WTC11 (cell line): ENCODE measurements at regions of chr15 and their contacts with region 1.

Region 1: GRCh38 chr15:52227456-52227855 is 36.3 kb upstream of the GNB5 start:
- DNase-seq: peak; percentile 76
- ATAC-seq: peak; percentile 95
- H3K4me3 Mint-ChIP-seq: no peak overlapping the region
- H3K27ac Mint-ChIP-seq: no peak overlapping the region
- H3K4me1 Mint-ChIP-seq: no peaks in the 10 kb centered on the region
- H3K27me3 Mint-ChIP-seq: no peaks in the 10 kb centered on the region
- CTCF ChIP-seq: peak; percentile 60

Region 2: GRCh38 chr15:52171386-52171785 is 56.1 kb before region 1 on chr15:
- CTCF ChIA-PET with region 1: interaction called, 10 read pairs
- POLR2A ChIA-PET with region 1: no interaction called
- DNase-seq: no peak
- ATAC-seq: peak; percentile 94
- H3K4me3 Mint-ChIP-seq: no peak overlapping the region
- H3K27ac Mint-ChIP-seq: no peak overlapping the region
- H3K4me1 Mint-ChIP-seq: peaks cover 9% of the 10 kb centered on the region
- H3K27me3 Mint-ChIP-seq: no peaks in the 10 kb centered on the region
- CTCF ChIP-seq: no peak

Region 3: GRCh38 chr15:52179278-52180195 is 47.9 kb before region 1 on chr15:
- CTCF ChIA-PET with region 1: interaction called, 15 read pairs
- POLR2A ChIA-PET with region 1: no interaction called
- DNase-seq: peak; percentile 89
- ATAC-seq: peak; percentile 87
- H3K4me3 Mint-ChIP-seq: peak overlapping the region; percentile 94
- H3K27ac Mint-ChIP-seq: peak overlapping the region; percentile 96
- H3K4me1 Mint-ChIP-seq: peaks cover 31% of the 10 kb centered on the region
- H3K27me3 Mint-ChIP-seq: peaks cover 22% of the 10 kb centered on the region
- CTCF ChIP-seq: no peak

Region 4: DNA sequence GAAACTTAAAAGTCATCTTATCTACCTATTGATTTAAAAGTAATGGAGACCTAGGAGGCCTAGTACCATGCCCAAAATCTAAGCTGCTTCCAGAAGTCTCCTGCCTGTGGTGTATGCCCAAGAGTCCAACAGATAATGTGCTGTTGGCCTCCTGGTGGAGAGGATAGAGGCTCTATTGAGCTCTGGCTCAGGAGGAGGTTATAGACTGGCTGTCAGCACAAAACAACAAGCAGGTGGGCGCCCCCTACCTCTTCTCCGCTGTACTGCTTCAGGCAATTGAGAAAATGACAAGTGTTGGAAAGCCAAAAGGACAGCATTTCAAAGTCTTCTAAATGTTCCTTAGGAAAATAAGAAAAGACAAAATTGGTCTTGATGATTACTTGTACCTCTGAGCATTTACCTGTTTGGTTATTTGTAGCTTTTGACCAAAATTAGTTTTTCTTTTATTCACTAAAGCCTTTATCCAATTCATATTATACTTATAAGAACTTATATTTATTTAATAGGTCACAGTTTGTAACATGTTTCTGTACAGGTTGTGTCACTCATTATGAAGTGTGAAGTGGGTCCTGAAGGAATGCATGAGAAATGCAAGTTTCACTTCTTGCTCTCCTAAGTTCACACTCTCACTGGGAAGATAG is 19.0 kb before region 1 on chr15:
- CTCF ChIA-PET with region 1: interaction called, 39 read pairs
- POLR2A ChIA-PET with region 1: no interaction called
- DNase-seq: peak; percentile 86
- ATAC-seq: peak; percentile 98
- H3K4me3 Mint-ChIP-seq: no peak overlapping the region
- H3K27ac Mint-ChIP-seq: no peak overlapping the region
- H3K4me1 Mint-ChIP-seq: peaks cover 7% of the 10 kb centered on the region
- H3K27me3 Mint-ChIP-seq: no peaks in the 10 kb centered on the region
- CTCF ChIP-seq: peak; percentile 90

Region 5: DNA sequence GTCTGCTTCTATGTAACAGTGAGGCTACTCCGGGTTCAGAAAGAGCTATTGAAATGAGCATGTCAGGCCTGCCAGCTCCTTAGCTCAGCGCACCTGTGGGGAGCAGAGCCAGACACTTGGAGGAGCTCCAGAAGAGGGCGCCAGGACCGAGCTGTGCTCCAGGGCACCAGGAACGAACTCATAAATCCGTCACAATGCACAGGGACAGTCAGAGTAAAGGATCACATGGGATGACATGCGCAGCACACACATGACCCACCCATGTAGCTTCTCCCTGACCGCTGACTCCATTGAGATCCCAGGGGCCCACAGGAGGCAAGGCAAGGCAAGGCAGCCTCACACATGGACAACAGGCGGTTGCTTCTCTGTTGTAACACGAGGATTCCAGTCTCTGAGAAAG is 10.3 kb before region 1 on chr15:
- CTCF ChIA-PET with region 1: interaction called, 38 read pairs
- POLR2A ChIA-PET with region 1: interaction called, 3 read pairs
- DNase-seq: peak; percentile 68
- ATAC-seq: peak; percentile 98
- H3K4me3 Mint-ChIP-seq: no peak overlapping the region
- H3K27ac Mint-ChIP-seq: no peak overlapping the region
- H3K4me1 Mint-ChIP-seq: no peaks in the 10 kb centered on the region
- H3K27me3 Mint-ChIP-seq: no peaks in the 10 kb centered on the region
- CTCF ChIP-seq: no peak; the same call in 1 of the 2 replicates

Region 6: GRCh38 chr15:52256366-52256765 is 28.9 kb after region 1 on chr15:
- CTCF ChIA-PET with region 1: interaction called, 10 read pairs
- POLR2A ChIA-PET with region 1: no interaction called
- DNase-seq: peak; percentile 72
- ATAC-seq: no peak
- H3K4me3 Mint-ChIP-seq: no peak overlapping the region
- H3K27ac Mint-ChIP-seq: no peak overlapping the region
- H3K4me1 Mint-ChIP-seq: peaks cover 32% of the 10 kb centered on the region
- H3K27me3 Mint-ChIP-seq: no peaks in the 10 kb centered on the region
- CTCF ChIP-seq: peak; percentile 78